Activated CD4-positive, alpha-beta memory T cell treated with anti-CD3 and anti-CD28 coated beads, Interleukin-2, amount 10 ng/mL, durations not matched to agents 7 days and 5 days (primary cell): ENCODE measurements at regions of chr2 and their contacts with region 1.

Region 1: DNA sequence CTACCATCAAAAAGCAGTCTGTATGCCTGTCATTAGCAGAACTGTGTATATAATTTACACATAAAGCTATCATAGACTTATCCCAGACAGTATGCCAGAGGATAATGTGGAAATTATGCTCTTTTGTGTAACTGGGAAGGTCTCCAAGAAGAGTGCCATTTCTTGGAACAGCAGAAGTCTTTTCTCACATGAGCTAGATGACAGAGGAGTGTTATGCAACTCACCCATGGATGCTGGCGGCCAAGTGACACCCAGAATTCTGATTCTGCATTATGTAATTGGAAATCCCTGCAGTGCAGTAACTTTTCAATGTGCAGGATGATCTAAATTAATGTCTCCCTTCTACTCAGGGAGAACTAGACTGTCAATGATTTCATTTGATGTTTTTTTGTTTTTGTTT is 160.0 kb downstream of the UBE2E3 start:
- DNase-seq: no peak
- H3K4me3 Mint-ChIP-seq: peak overlapping the region; percentile 65
- H3K27ac Mint-ChIP-seq: peak overlapping the region; percentile 79
- H3K4me1 Mint-ChIP-seq: peaks cover 76% of the 10 kb centered on the region
- H3K27me3 Mint-ChIP-seq: no peaks in the 10 kb centered on the region

Region 2: GRCh38 chr2:181058378-181059269 is 81.8 kb before region 1 on chr2:
- CTCF ChIA-PET with region 1: no interaction called
- POLR2A ChIA-PET with region 1: no interaction called
- DNase-seq: peak; percentile 26
- H3K4me3 Mint-ChIP-seq: no peak overlapping the region
- H3K27ac Mint-ChIP-seq: no peak overlapping the region
- H3K4me1 Mint-ChIP-seq: peaks cover 3% of the 10 kb centered on the region
- H3K27me3 Mint-ChIP-seq: no peaks in the 10 kb centered on the region

Region 3: GRCh38 chr2:181123798-181124231 is 16.6 kb before region 1 on chr2:
- CTCF ChIA-PET with region 1: interaction called, 14 read pairs
- POLR2A ChIA-PET with region 1: interaction called, 286 read pairs
- DNase-seq: peak; percentile 75
- H3K4me3 Mint-ChIP-seq: peak overlapping the region; percentile 48
- H3K27ac Mint-ChIP-seq: peak overlapping the region; percentile 85
- H3K4me1 Mint-ChIP-seq: peaks cover 74% of the 10 kb centered on the region
- H3K27me3 Mint-ChIP-seq: no peaks in the 10 kb centered on the region

Region 4: DNA sequence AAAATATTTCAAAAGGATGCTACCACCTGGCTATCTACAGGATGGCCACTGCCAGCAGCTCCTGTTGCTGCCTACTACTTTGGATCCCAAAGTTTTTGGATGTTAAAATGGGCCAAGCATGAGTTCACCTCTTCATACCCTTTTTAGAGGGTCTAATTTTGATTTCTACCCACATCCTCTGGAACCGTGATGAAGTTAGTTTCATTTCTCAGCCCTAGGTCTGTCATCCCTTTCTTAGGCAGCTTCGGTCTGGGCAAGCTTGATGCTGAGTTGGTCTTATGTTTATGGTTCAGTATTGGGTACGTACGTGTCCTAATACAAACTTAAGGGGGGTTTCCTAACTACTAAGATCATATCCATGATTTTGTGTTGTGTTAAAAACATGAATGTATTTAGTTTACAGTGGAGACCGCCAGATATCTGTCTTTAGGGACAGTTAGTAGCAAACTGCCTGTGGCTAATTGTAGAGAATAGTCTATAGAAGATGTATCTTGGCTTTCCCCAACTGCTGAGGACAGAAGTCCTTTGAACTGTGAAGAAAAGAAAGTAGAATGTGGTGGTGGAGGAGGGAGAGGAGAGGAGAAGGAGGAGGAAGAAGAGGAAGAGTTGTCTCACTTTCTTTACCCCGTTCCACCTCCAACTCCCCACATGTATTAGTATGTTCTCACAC is 24.9 kb after region 1 on chr2:
- CTCF ChIA-PET with region 1: no interaction called
- POLR2A ChIA-PET with region 1: interaction called, 22 read pairs
- DNase-seq: no peak
- H3K4me3 Mint-ChIP-seq: peak overlapping the region; percentile 56
- H3K27ac Mint-ChIP-seq: peak overlapping the region; percentile 95
- H3K4me1 Mint-ChIP-seq: peaks cover 59% of the 10 kb centered on the region
- H3K27me3 Mint-ChIP-seq: no peaks in the 10 kb centered on the region